HEK293 (cell line): ENCODE measurements at regions of chr6 and their contacts with region 1.

Region 1: DNA sequence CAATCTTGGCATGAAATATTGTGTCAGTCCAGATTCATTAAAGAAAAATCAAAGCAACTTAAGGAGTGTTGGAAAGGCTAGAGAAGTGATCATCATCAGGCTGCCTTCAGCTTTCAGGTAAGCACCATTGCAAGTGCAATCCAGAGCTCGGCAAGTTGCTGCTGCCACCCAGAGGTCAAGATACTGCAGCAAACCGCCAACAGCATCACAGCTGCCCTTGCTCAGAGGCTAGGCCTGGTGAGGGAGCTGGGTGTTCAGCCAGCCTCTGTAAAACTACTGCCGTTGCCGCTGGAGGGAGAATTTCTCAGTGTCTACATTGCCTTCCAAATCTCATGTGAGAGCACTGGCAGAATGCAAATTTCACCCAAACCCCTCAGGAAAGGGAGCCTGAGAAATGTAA is 5.8 kb upstream of the SYNE1 start:
- H3K4me3 ChIP-seq: no peak overlapping the region
- H3K27ac ChIP-seq: no peak overlapping the region
- H3K4me1 ChIP-seq: no peaks in the 10 kb centered on the region
- CTCF ChIP-seq: peak; percentile 82

Region 2: DNA sequence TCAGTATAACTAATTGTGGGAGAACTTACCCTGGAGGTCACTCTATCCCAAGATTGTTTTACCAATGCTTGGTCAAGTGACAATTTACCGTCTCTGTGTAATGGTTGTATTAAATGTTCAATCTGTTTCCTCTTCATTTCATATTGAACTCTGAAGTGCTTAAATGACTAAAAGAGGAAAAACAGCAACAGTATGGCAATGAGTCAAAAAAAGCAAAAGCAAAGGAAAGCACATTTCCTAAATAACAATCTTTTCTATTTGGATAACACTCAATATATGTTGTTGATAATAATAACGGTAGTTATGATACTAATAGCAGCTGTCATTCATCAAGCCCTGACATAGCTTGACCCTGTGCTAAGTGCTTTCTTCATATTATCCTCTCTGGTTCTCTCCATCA is 158.2 kb before region 1 on chr6:
- CTCF ChIA-PET with region 1: interaction called, 18 read pairs
- POLR2A ChIA-PET with region 1: no interaction called
- H3K4me3 ChIP-seq: no peak overlapping the region
- H3K27ac ChIP-seq: no peak overlapping the region
- H3K4me1 ChIP-seq: no peaks in the 10 kb centered on the region
- CTCF ChIP-seq: no peak

Region 3: DNA sequence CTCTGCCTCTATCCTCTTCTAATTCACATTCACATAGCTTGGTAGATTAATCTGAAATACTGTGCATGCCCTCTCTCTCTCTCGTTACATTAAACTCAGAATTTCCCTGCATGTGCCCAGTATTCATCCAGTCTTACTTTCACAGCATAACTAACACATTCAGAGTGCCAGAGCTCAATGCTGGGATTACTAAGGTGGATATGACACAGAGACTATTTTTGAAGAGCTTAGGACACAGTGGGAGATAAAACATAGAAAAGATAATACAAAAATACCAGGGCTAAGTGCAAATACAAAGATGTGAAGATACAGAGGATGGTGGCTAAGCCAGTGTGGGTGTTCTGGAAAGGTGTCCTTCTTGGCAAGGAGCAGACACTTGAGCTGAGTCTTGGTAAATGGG is 12.2 kb before region 1 on chr6:
- CTCF ChIA-PET with region 1: interaction called, 39 read pairs
- POLR2A ChIA-PET with region 1: no interaction called
- H3K4me3 ChIP-seq: no peak overlapping the region
- H3K27ac ChIP-seq: no peak overlapping the region
- H3K4me1 ChIP-seq: no peaks in the 10 kb centered on the region
- CTCF ChIP-seq: no peak

Region 4: GRCh38 chr6:152716322-152716721 is 73.3 kb after region 1 on chr6:
- CTCF ChIA-PET with region 1: no interaction called
- POLR2A ChIA-PET with region 1: no interaction called
- H3K4me3 ChIP-seq: no peak overlapping the region
- H3K27ac ChIP-seq: no peak overlapping the region
- H3K4me1 ChIP-seq: no peaks in the 10 kb centered on the region
- CTCF ChIP-seq: no peak